Aorta (tissue), 5 donors: ENCODE measurements at regions of chr17 and their contacts with region 1.

Region 1: DNA sequence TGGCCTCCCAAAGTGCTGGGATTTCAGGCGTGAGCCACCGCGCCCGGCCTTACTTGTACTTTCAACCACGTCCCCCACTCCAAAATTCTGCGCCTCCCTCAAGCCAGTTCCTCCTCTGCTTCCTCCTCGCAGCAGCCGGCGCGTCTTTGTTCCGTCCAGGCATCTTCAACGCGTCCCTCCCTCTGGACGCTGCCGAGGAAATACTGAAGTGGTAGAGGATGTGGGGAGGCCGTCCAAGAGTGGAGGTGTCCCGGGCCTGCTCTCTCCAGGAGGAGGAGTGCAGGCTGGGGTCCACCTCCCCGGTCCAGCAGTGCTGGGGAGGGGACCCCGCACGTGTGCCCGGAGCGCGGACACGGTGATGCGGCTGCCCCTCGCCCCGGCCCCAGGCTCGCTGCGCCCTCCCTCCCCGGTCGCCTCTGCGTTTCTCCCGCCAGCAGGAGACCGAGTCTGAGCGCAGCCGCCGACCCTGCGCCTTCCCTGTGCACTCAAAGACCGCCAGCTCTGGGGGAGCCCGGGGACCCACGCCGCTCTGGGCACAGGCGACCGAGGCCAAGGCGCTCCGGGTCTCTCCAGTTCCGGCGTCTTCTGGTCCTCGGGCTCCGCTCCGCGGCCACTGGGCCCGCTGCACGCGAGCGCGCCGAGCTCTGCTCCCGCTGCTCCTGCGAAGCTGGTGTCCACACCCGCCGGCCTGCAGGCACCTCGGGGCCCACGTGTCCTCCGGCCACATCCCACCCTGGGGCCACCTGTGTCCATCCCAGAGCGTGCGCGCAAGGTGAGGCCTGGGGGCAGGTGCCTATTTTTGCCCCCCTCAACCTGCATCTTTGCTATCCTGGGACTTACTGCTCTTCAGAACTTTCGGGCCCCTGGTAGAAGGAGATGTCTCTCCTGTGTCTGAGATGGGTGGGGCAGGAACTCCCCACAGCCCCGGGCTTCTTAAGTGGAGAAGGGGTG is 31.7 kb downstream of the OSBPL7 start:
- DNase-seq: peak in 1 of 2 donors; percentile 88
- ATAC-seq: peak; percentile 82
- H3K4me3 ChIP-seq: no peak overlapping the region
- H3K27ac ChIP-seq: no peak overlapping the region
- H3K4me1 ChIP-seq: no peaks in the 10 kb centered on the region
- H3K27me3 ChIP-seq: peaks cover 0 to 2% of the 10 kb centered on the region in 2 donors

Region 2: GRCh38 chr17:47725446-47726111 is 64.3 kb before region 1 on chr17:
- intact Hi-C with region 1: loop called in 1 of 2 experiments (anchors 5 kb)
- DNase-seq: no peak
- ATAC-seq: no peak
- H3K4me3 ChIP-seq: no peak overlapping the region
- H3K27ac ChIP-seq: no peak overlapping the region
- H3K4me1 ChIP-seq: no peaks in the 10 kb centered on the region
- H3K27me3 ChIP-seq: no peaks in the 10 kb centered on the region